HCT116 (cell line): ENCODE measurements at regions of chr3 and their contacts with region 1.

Region 1: GRCh38 chr3:128301186-128302023 is 148.1 kb downstream of the EEFSEC start:
- DNase-seq: no peak
- ATAC-seq: no peak
- H3K4me3 ChIP-seq: no peak overlapping the region
- H3K27ac ChIP-seq: no peak overlapping the region
- H3K4me1 ChIP-seq: no peaks in the 10 kb centered on the region; a peak in 1 of 4 replicates
- H3K27me3 ChIP-seq: no peaks in the 10 kb centered on the region
- CTCF ChIP-seq: no peak
- POLR2A ChIP-seq: no peak
- RAD21 ChIP-seq: no peak

Region 2: GRCh38 chr3:127431066-127431465 is 870.3 kb before region 1 on chr3:
- CTCF ChIA-PET with region 1: no interaction called
- POLR2A ChIA-PET with region 1: no interaction called
- RAD21 ChIA-PET with region 1: no interaction called
- intact Hi-C with region 1: loop called (anchors 5 kb)
- DNase-seq: no peak
- ATAC-seq: no peak
- H3K4me3 ChIP-seq: no peak overlapping the region
- H3K27ac ChIP-seq: no peak overlapping the region
- H3K4me1 ChIP-seq: peaks cover 0 to 5% of the 10 kb centered on the region in 2 experiments; a peak in 2 of 4 replicates
- H3K27me3 ChIP-seq: no peaks in the 10 kb centered on the region; the same call in 1 of the 2 replicates
- CTCF ChIP-seq: no peak
- POLR2A ChIP-seq: no peak
- RAD21 ChIP-seq: no peak